Activated CD4-positive, alpha-beta memory T cell treated with anti-CD3 and anti-CD28 coated beads for 36 hours (primary cell): ENCODE measurements at regions of chr1 and their contacts with region 1.

Region 1: DNA sequence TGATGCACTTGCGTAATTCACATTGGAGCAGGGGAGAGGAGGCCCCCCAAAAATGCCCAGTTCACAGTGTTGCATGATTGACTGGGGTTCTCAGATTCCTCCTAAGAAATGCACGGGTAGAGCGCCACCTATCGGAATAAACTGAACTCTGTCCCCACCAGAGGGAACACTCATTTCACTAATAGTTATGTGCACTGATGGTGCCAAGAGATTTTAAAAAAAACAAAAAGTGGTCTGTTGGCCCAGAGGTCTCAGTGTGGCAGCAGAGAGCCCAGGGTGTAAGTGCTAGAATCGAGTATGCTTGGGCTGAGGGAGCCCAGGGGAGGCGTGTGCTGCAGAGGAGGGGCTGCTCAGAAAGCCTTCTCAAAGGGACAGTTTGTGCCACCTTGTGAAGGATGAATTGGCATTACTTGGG is 6.9 kb downstream of the PINK1 start:
- DNase-seq: peak; percentile 72
- H3K4me3 Mint-ChIP-seq: no peak overlapping the region
- H3K27ac Mint-ChIP-seq: no peak overlapping the region
- H3K4me1 Mint-ChIP-seq: no peaks in the 10 kb centered on the region
- H3K27me3 Mint-ChIP-seq: no peaks in the 10 kb centered on the region

Region 2: DNA sequence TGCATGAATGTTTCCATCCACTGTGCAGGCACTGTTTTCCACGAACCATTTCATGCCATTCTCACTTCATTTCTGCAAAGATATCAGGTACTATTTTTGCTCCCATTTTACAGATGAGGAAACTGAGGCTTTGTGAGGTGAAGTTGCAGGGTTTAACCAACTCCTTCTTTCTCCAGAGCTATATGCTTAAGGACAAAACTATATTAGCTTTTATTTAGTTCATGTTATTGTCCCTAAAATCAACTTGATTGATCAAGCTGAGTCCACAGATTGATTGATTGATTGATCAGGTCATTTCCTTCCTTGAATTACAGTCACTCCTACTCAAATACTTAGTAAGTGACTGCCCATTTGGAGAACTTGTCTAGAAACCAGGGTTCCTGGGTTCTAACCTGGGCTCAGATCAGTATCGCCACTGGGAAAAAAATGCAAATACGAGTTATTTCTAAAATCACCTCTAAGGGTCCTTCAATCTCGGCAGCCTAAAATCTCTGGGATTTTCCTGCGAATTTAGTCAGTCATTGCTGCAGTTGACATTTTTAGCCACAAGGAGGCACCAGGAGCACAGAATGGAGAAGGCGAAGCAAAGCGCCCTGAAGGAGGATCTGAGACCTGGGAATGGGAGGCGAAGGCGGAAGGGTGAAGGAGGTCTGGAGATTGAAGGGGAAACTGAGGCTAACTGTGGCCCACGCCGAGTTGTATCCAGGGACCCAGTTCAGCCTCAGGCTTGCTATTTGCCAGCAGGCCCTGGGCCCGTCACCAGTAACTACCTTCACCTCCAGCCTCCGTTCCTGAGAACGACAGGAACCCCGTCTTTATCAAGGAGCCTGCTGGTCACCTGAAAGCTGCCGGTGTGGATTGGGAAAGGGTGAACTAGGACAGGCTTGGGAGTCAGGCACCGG is 118.0 kb before region 1 on chr1:
- CTCF ChIA-PET with region 1: interaction called, 23 read pairs
- POLR2A ChIA-PET with region 1: no interaction called
- intact Hi-C with region 1: loop called (anchors 1 kb)
- DNase-seq: peak; percentile 72
- H3K4me3 Mint-ChIP-seq: no peak overlapping the region
- H3K27ac Mint-ChIP-seq: no peak overlapping the region
- H3K4me1 Mint-ChIP-seq: no peaks in the 10 kb centered on the region
- H3K27me3 Mint-ChIP-seq: peaks cover 5% of the 10 kb centered on the region

Region 3: GRCh38 chr1:20574686-20575540 is 65.3 kb before region 1 on chr1:
- CTCF ChIA-PET with region 1: interaction called, 75 read pairs
- POLR2A ChIA-PET with region 1: no interaction called
- intact Hi-C with region 1: loop called (anchors 1 kb)
- DNase-seq: peak; percentile 86
- H3K4me3 Mint-ChIP-seq: no peak overlapping the region
- H3K27ac Mint-ChIP-seq: no peak overlapping the region
- H3K4me1 Mint-ChIP-seq: no peaks in the 10 kb centered on the region
- H3K27me3 Mint-ChIP-seq: peaks cover 10% of the 10 kb centered on the region